Posterior cingulate gyrus (tissue), 11 donors: ENCODE measurements at regions of chr1 and their contacts with region 1.

Region 1: DNA sequence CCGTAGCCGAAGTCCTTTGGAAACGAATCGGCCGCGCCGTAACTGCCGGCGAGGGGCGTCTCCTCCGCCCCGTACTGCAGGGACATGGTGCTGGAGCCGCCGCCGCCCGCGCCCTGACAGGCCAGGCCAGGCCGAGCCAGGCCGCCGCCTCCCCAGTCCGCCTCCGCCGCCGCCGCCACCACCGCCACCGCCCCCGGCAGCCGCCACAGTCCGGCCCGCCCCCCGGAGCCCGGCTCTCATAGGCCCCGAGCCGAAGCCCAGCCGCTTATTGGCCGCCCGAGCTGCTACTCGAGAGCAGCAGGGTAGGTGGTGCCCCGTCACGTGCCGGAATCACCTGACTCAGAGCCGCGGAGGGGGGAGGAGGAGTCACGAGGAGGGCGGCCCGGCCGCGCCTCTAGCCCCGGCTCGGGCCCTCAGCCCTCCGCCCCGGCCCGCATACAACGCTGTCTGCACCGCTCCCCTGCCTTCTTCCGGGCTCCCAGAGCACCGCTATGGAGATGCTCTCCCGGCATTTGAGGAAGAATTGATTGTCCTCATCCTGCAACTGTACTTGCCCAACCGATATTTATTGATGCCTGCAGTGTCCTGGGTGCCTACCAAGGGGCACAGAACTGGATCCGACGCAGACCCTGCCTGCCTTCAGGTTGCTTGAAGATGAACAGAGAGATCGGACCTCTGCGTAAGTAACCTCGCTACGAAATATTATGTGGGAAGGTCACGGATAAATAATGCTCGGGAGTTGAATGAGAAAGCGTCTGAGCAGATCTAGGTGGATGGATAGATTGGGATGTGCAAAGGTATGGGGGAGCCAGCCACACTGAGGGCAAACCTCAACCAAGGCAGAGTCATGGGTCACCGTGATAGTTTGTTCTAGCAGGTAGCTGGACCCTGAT is at the start of gene RRAGC:
- DNase-seq: peak; percentile 99 to 100 (median 100)

Region 2: DNA sequence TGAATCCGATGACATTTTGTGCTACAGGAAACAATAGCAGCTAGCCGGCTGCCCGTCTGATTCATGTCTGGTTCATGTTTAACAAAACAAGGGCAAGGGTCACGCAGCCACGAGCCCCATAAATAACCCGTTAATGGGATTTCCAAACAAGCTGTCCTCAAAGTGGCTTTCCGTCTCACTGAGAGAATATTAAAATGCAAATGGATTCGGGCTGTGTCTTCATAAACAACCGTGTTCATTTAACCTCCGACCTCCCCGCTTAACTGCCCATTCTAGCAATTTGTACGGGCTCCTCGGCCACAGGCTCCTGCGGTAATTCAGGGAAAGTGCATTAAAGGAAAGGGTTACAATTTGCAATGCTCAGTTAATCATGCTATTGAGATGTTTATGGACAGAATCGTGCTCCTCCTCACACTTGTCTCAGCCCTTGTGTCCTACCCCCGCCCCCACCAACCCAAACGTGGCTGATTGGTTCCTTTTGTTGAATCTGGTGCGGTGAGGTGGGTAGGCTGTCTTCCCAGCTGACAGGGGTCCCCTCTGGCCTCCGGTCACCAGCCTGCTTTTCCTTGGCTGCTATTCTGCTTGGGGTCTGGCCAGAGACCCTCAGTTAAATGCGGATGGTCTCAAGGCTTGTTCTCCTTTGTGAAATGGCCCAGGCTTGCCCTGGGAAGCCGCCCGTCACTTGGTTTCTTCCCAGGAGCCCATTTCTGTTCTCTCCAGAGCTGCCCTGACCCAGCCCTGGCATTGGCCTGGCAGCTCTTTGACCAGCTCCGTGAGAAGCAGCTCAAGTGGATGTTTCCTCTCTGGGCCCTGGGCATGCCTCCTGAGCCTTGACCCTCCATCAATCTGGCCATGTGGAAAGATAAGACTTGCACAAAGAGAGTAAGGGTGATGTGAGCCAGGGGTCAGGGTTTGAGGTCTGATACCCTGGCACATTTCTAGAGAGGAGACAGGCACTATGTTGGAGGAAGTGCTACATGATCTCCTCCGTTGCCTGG is 612.6 kb before region 1 on chr1:
- intact Hi-C with region 1: no loop called
- DNase-seq: peak in 1 of 10 donors; percentile 21

Region 3: DNA sequence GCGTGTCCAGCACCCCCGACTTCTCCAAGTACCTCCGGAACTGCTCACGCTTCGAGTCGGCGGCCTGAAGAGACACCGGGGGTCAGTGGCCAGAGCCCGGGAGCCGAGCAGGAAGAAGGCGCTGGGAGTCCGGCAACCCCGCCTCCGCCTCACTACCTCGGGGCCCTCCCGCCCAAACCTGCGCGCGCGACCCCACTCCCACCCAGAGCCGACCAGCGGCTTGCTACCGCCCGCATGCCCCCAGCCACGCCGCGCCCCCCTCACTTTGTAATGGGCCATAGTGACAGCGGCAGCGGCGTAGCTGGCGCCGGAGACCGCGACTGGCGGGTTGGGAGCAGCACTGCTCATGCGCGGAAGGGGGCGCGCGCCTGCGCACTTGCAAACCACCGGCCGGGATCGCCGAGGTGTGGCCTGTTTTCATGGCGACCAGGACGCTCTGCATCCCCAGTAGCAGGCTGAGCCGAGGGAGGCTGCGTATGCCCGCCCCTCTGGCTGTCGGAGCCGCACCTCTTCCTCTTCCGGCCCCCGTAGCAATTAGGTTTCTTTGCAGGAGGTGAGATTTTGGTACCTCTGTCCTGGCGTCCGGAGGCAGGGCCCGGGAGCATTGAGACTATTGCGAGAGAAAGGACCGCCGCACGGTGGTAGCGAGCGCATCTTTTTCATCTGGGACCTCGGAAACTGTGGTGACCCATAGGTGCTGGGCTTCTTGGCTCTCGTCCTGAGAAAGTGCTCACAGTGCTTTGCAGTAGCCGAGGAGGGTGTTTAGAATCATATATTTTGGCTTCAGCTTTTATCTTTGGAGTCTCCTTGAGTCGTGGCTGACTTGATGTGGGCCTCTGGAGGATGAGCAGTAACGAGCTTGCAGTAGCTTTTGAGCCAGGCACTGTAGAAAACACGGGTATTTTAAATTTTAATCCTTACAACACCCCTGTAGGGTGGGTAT is 13.5 kb after region 1 on chr1 and contains the start of gene MYCBP:
- intact Hi-C with region 1: loop called (anchors 1 kb)
- DNase-seq: peak; percentile 94 to 100 (median 96)

Region 4: GRCh38 chr1:39091845-39092645 is 232.2 kb after region 1 on chr1:
- intact Hi-C with region 1: loop called (anchors 5 kb)
- DNase-seq: peak in 9 of 10 donors; percentile 42 to 95 (median 73)